ENCODE measurements at regions of chr22 and their contacts with region 1.

Region 1: DNA sequence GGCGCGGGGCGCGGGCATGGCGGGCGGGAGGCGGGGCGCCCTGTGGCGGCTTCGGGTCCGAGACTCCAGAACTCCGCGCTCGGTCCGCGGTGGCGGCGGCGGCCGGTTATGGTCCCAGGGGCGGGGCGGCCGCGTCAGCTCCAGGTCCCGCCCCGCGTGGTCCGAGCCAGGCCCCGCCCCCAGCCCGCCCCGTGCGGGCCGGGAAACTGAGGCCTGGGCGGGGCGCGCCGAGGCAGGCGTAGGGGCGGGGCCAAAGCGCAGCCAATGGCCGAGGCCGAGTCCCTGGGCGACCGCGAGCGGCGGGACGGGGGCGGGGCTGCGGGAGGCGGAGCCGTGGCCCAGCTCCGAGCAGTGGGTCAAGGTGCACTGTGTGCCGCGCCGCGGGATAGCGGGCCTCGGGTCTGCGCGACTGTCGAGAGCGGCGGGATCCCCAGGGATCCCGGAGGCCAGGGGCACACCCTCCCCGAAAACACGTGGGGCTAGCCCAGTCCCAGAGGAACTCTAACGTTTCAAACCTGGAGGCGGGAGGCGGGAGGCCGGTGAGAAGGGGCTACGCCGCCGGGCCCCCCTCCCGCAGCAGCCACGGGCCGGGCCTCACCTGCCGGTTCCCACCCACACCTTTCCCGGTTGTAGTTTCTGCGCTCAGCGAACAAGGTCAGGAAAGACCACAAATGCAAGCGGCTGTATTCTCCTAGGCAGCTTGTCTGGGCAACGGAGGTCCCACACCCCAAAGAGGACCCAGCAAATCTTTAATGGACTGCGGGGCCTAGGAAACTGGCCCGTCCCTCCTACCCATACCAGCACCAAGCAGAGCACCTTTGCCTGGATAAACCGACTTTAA is at the start of gene SLC25A1:
- DNase-seq: peak; percentile 91 to 95
- H3K4me3 ChIP-seq: peak within 1 kb of the TSS; percentile 92
- H3K4me3 Mint-ChIP-seq: peak within 1 kb of the TSS; percentile 78
- H3K27ac Mint-ChIP-seq: peak within 1 kb of the TSS; percentile 70
- H3K4me1 ChIP-seq: peaks cover 28% of the 10 kb centered on the region
- H3K4me1 Mint-ChIP-seq: no peaks in the 10 kb centered on the region
- H3K27me3 ChIP-seq: no peaks in the 10 kb centered on the region
- H3K27me3 Mint-ChIP-seq: no peaks in the 10 kb centered on the region
- CTCF ChIP-seq: no peak
- total RNA-seq, gene SLC25A1: 142 and 155 TPM in 2 replicates

Region 2: DNA sequence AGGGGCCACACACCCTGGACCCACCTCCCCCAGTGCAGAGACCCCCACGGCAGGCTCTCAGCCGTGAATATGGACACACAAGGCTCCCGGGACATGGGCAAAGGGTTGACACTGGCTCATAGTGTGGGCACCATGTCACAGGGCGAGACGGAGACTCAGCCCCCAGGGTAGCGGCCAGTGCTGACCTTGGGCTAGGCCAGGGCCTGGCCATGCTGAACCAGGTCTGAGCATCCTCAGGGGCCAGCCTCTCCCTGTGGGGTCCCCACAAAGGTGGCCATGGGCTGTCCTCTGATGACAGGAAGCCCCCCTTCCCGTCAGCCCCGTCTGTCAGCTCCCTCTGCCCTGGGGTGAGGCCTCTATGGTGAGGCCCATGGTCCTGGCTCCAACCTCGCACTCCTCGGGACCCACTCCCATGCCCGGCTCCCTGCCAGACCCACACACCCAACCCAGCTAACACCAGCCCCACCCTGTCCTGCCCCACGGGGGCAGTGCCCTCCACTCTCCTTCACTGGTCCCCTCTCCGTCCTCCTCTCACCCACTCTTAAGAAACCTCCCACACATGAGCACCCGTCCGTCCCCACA is 223.8 kb before region 1 on chr22:
- CTCF ChIA-PET with region 1: no interaction called
- POLR2A ChIA-PET with region 1: no interaction called
- intact Hi-C with region 1: no loop called
- DNase-seq: peak in 1 of 2 experiments; percentile 37
- H3K4me3 ChIP-seq: no peak overlapping the region
- H3K4me3 Mint-ChIP-seq: no peak overlapping the region
- H3K27ac Mint-ChIP-seq: no peak overlapping the region
- H3K4me1 ChIP-seq: no peaks in the 10 kb centered on the region
- H3K4me1 Mint-ChIP-seq: peaks cover 7% of the 10 kb centered on the region
- H3K27me3 ChIP-seq: no peaks in the 10 kb centered on the region
- H3K27me3 Mint-ChIP-seq: no peaks in the 10 kb centered on the region
- CTCF ChIP-seq: no peak

Region 3: DNA sequence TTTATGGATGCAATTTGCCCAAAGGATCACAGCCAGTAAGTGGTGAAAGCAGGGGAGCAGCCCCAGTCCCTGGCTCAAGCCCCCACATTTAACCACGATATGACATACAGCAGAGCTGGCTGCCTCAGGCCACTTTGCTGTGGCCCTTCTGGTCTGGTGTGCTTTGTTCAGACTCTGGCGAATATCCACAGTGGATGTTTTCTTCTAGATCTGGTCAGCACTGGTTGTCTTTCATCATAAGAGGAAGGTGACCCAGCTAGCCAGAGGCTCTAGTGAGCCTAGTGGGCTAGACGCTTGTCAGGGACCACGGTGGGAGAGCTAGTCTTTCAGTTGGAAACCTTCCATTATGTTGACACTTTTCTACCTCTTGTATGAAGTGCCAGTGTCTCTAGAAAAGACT is 99.2 kb before region 1 on chr22:
- CTCF ChIA-PET with region 1: no interaction called
- POLR2A ChIA-PET with region 1: no interaction called
- intact Hi-C with region 1: no loop called
- DNase-seq: no peak
- H3K4me3 ChIP-seq: no peak overlapping the region
- H3K4me3 Mint-ChIP-seq: no peak overlapping the region
- H3K27ac Mint-ChIP-seq: no peak overlapping the region
- H3K4me1 ChIP-seq: no peaks in the 10 kb centered on the region; the same call in 1 of the 2 replicates
- H3K4me1 Mint-ChIP-seq: no peaks in the 10 kb centered on the region
- H3K27me3 ChIP-seq: no peaks in the 10 kb centered on the region
- H3K27me3 Mint-ChIP-seq: no peaks in the 10 kb centered on the region
- CTCF ChIP-seq: no peak

Region 4: GRCh38 chr22:19130959-19131684 is 47.8 kb before region 1 on chr22 and contains the start of gene TSSK2:
- CTCF ChIA-PET with region 1: no interaction called
- POLR2A ChIA-PET with region 1: no interaction called
- intact Hi-C with region 1: no loop called
- DNase-seq: no peak
- H3K4me3 ChIP-seq: no peak within 1 kb of the TSS
- H3K4me3 Mint-ChIP-seq: no peak within 1 kb of the TSS
- H3K27ac Mint-ChIP-seq: no peak within 1 kb of the TSS
- H3K4me1 ChIP-seq: no peaks in the 10 kb centered on the region
- H3K4me1 Mint-ChIP-seq: no peaks in the 10 kb centered on the region
- H3K27me3 ChIP-seq: no peaks in the 10 kb centered on the region
- H3K27me3 Mint-ChIP-seq: no peaks in the 10 kb centered on the region
- CTCF ChIP-seq: no peak
- total RNA-seq, gene TSSK2: not detected in 2 replicates

Region 5: DNA sequence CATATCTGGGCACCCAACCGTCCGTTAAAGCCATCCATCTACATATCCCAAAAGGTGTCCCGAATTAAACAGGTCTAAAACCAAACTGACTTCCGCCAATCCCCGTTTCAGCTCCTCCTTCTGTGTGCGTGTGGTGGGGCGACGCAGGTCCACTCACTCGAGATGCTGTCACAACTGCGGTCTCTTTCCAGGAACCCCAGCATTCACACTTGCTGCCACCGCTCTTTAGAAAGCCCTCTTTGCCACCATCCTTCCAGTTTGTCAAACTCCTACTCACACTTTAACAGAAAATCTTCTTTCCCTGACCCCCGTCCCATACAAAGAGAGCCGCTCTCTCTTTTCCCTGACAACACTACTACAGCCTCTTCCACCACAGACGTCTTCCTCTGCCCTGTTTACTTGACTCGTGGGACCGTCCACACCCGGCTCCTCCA is 34.9 kb before region 1 on chr22:
- CTCF ChIA-PET with region 1: interaction called, 7 read pairs
- POLR2A ChIA-PET with region 1: interaction called, 5 read pairs
- intact Hi-C with region 1: loop called (anchors 5 kb)
- DNase-seq: no peak
- H3K4me3 ChIP-seq: peak overlapping the region; percentile 81
- H3K4me3 Mint-ChIP-seq: peak overlapping the region; percentile 97
- H3K27ac Mint-ChIP-seq: peak overlapping the region; percentile 92
- H3K4me1 ChIP-seq: peaks cover 4% of the 10 kb centered on the region; the same call in 1 of the 2 replicates
- H3K4me1 Mint-ChIP-seq: peaks cover 8% of the 10 kb centered on the region
- H3K27me3 ChIP-seq: no peaks in the 10 kb centered on the region
- H3K27me3 Mint-ChIP-seq: peaks cover 4% of the 10 kb centered on the region
- CTCF ChIP-seq: no peak

Region 6: DNA sequence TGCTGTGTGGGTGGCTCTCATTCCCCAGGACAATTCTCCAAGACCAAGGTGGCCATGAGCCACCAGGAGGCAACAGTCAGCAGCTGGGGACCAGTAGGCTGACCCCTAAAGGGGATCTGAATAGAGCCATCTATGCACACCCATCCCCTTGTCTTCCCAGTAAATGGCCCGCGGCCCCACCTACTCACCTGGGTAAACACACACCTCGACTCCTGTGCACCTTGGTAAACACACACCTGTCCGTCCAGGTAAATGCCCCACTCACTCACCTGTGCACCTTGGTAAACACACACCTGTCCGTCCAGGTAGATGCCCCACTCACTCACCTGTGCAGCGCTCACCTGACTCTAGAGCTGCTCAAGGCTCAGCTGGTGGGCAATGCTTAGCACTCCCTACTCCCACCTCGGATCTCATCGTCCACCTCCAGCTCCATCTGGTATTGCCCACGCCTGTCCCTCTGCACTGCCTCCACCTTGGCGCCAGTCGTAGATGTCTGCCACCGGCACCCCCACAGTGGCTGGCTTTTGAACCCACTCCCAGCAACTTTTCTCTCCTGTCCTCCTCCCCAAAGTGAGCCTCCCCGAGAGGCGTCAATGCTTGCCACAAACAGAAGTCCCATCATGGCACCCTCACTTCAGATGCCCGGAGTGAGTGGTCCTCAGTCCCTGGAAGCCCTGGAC is 10.5 kb before region 1 on chr22:
- CTCF ChIA-PET with region 1: interaction called, 13 read pairs
- POLR2A ChIA-PET with region 1: no interaction called
- intact Hi-C with region 1: no loop called
- DNase-seq: peak; percentile 78 to 85
- H3K4me3 ChIP-seq: no peak overlapping the region
- H3K4me3 Mint-ChIP-seq: peak overlapping the region; percentile 44
- H3K27ac Mint-ChIP-seq: no peak overlapping the region
- H3K4me1 ChIP-seq: peaks cover 38% of the 10 kb centered on the region
- H3K4me1 Mint-ChIP-seq: peaks cover 43% of the 10 kb centered on the region
- H3K27me3 ChIP-seq: no peaks in the 10 kb centered on the region
- H3K27me3 Mint-ChIP-seq: peaks cover 2% of the 10 kb centered on the region
- CTCF ChIP-seq: peak; percentile 38 to 66

Region 7: GRCh38 chr22:19291580-19292457 is 112.9 kb after region 1 on chr22 and contains the start of gene CLTCL1:
- CTCF ChIA-PET with region 1: interaction called, 8 read pairs
- POLR2A ChIA-PET with region 1: no interaction called
- intact Hi-C with region 1: loop called (anchors 1 kb)
- DNase-seq: peak; percentile 82 to 91
- H3K4me3 ChIP-seq: peak within 1 kb of the TSS; percentile 89
- H3K4me3 Mint-ChIP-seq: peak within 1 kb of the TSS; percentile 82
- H3K27ac Mint-ChIP-seq: peak within 1 kb of the TSS; percentile 42
- H3K4me1 ChIP-seq: no peaks in the 10 kb centered on the region
- H3K4me1 Mint-ChIP-seq: peaks cover 4% of the 10 kb centered on the region
- H3K27me3 ChIP-seq: no peaks in the 10 kb centered on the region
- H3K27me3 Mint-ChIP-seq: no peaks in the 10 kb centered on the region
- CTCF ChIP-seq: no peak
- total RNA-seq, gene CLTCL1: 7.8 and 7.9 TPM in 2 replicates

Region 8: DNA sequence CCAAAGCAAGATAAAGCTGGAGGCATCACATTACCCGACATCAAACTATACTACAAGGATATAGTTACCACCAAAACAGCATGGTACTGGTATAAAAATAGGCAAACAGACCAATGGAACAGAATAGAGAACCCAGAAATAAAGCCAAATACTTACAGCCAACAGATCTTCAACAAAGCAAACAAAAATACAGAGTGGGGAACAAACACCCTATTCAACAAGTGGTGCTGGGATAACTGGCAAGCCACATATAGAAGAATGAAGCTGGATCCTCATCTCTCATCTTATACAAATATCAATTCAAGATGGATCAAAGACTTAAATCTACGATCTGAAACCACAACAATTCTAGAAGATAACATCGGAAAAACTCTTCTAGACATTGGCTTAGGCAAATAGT is 162.6 kb after region 1 on chr22:
- CTCF ChIA-PET with region 1: no interaction called
- POLR2A ChIA-PET with region 1: no interaction called
- intact Hi-C with region 1: loop called (anchors 5 kb)
- DNase-seq: no peak
- H3K4me3 ChIP-seq: no peak overlapping the region
- H3K4me3 Mint-ChIP-seq: no peak overlapping the region
- H3K27ac Mint-ChIP-seq: no peak overlapping the region
- H3K4me1 ChIP-seq: no peaks in the 10 kb centered on the region
- H3K4me1 Mint-ChIP-seq: no peaks in the 10 kb centered on the region
- H3K27me3 ChIP-seq: no peaks in the 10 kb centered on the region
- H3K27me3 Mint-ChIP-seq: no peaks in the 10 kb centered on the region
- CTCF ChIP-seq: no peak

Region 9: DNA sequence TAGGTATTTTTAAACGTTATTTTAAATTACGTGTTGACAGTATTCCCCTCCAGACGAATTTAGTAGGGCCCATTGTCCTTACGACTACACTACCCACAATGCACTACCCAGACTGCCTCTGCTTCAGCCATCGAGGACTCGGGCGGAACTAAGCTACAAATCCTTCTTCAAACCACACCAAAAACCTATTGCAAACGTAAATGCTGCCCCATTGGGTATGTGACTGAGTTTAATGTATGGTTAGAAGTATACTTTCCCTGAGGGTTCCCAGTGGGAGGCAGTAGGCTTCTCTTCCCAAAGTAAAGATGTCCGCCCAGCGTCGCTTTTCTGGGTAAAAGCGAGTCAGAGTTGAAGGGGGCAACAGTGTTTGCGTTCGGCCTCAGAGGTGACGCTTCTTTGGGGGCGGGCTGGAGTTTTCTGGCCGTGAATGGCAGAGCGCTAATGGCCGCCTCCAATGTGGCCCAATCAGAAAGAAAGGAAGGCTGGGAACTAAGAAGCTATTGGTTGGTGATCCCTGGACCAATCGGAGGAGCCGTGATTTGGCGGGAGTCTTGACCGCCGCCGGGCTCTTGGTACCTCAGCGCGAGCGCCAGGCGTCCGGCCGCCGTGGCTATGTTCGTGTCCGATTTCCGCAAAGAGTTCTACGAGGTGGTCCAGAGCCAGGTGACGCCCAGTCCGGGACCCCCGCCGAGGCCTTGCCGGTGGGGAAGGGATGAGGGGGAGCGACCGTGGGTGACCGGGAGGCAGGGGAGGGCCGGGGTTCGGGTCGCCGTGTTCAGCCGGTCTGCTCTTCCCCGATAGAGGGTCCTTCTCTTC is 300.7 kb after region 1 on chr22 and contains the start of gene CDC45:
- CTCF ChIA-PET with region 1: interaction called, 3 read pairs
- POLR2A ChIA-PET with region 1: interaction called, 5 read pairs
- intact Hi-C with region 1: loop called (anchors 5 kb)
- DNase-seq: peak; percentile 95 to 97
- H3K4me3 ChIP-seq: peak within 1 kb of the TSS; percentile 96
- H3K4me3 Mint-ChIP-seq: peak within 1 kb of the TSS; percentile 95
- H3K27ac Mint-ChIP-seq: peak within 1 kb of the TSS; percentile 100
- H3K4me1 ChIP-seq: peaks cover 6% of the 10 kb centered on the region; the same call in 1 of the 2 replicates
- H3K4me1 Mint-ChIP-seq: peaks cover 23% of the 10 kb centered on the region
- H3K27me3 ChIP-seq: no peaks in the 10 kb centered on the region
- H3K27me3 Mint-ChIP-seq: no peaks in the 10 kb centered on the region
- CTCF ChIP-seq: no peak
- total RNA-seq, gene CDC45: 41.7 and 44.6 TPM in 2 replicates

Measured in Caco-2 (cell line).